ENCODE measurements at regions of chr22 and their contacts with region 1.

Region 1: DNA sequence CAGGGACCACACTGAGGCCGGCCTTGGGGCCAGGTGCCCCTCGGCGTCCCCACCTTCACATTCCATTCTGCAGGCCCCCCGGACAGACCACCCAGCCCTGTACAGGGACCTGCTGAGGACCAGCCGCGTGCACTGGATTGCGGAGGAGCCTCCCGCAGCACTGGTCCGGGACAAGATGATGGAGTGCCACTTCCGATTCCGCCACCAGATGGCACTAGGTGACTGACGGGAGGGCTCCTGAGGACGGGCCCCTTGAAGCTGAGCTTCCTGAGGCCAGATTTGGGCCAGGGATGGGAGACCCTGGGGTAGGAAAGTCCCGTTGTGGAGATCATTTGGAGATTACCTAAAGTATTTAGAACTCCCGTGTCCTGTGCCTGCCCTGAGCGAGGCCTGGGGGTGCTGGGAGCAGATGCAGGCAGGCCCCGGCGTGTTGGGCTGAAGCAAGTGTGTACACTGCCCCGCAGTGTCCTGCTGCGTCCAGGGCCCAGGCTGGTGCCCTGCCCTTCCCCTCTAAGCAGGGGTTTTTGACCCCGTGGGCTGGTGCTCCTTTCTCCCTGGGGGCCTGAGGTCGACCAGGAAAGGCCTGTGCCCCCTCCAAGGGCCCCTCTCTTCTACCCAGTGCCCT is 20.0 kb downstream of the TRMU start:
- DNase-seq: peak; percentile 59 to 72
- ATAC-seq: peak; percentile 58 to 82
- H3K4me3 ChIP-seq: no peak overlapping the region
- H3K27ac ChIP-seq: peak overlapping the region in 1 of 2 experiments; percentile 76; a peak in 3 of 6 replicates
- H3K4me1 ChIP-seq: peaks cover 14% of the 10 kb centered on the region
- CTCF ChIP-seq: peak; percentile 61
- EP300 ChIP-seq: no peak
- POLR2A ChIP-seq: no peak
- RAD21 ChIP-seq: peak; percentile 81 to 86

Region 2: GRCh38 chr22:46380069-46380468 is 24.6 kb after region 1 on chr22:
- CTCF ChIA-PET with region 1: no interaction called
- POLR2A ChIA-PET with region 1: no interaction called
- DNase-seq: no peak
- ATAC-seq: no peak
- H3K4me3 ChIP-seq: no peak overlapping the region
- H3K27ac ChIP-seq: peak overlapping the region; percentile 91 to 93
- H3K4me1 ChIP-seq: peaks cover 51% of the 10 kb centered on the region
- CTCF ChIP-seq: no peak
- EP300 ChIP-seq: no peak
- POLR2A ChIP-seq: no peak
- RAD21 ChIP-seq: no peak

Region 3: DNA sequence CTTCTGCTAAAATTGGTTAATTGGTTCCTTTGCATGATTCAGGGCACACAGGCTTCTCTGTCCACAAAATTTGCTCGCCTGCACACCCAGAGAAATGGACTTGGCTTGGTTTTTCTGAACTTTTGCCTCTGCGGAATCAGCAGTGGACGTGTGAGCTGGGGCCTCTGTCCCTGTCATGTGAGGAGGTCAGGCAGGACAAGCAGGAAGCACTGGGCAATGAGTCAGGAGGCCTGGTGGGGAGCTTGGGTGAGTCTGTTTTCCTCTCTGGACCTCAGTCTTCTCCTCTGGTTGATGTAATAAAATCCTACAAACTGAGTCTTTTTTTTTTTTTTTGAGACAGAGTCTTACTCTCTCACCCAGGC is 192.4 kb after region 1 on chr22:
- CTCF ChIA-PET with region 1: interaction called, 184 read pairs
- POLR2A ChIA-PET with region 1: no interaction called
- DNase-seq: no peak
- ATAC-seq: peak; percentile 40 to 43; a peak in 2 of 6 replicates
- H3K4me3 ChIP-seq: no peak overlapping the region
- H3K27ac ChIP-seq: peak overlapping the region; percentile 32 to 81; a peak in 3 of 6 replicates
- H3K4me1 ChIP-seq: peaks cover 32% of the 10 kb centered on the region
- CTCF ChIP-seq: no peak
- EP300 ChIP-seq: no peak
- POLR2A ChIP-seq: no peak
- RAD21 ChIP-seq: no peak

Measured in A549 (cell line).